ENCODE measurements at regions of chr7 and their contacts with region 1.

Region 1: DNA sequence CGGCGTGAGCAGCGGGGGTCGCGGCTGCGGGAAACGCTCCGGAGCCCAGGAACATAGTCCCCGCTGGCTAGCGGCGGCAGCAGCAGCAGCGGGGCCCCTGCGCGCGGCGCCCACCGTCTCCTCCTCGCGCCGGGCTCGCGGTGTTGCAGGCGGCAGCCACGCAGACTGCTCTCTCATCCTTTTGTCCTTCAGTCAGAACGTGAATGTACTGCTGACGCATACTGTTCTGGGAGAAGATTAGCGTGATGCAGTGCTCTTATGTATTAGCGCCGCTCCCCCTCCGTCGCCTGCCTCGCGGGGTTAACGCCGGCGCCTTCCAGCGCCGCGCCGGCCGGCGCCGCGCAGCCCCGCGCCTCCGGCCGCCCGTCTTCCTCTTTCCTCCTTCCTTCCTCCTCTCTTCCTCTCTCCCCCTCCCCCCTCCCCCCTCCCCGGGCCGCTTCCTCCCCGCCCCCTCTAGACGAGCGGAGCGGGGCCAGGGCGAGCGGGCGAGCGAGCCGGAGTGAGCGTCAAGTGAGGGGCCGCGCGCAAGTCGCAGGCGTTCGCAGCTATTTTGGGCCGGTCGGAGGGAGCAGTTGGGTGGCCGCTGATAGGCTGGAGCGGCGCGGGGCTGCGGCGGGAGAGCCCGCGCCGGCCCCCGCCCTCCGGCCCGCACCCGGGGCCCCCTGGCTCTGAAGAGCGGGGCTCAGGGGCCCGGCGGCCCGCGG is 816 bp upstream of the LRRC4 start:
- DNase-seq: peak; percentile 81
- ATAC-seq: peak; percentile 98
- H3K4me3 Mint-ChIP-seq: peak overlapping the region; percentile 64
- H3K27ac Mint-ChIP-seq: no peak overlapping the region
- H3K4me1 Mint-ChIP-seq: peaks cover 27% of the 10 kb centered on the region
- H3K27me3 Mint-ChIP-seq: no peaks in the 10 kb centered on the region

Region 2: GRCh38 chr7:127983804-127984332 is 48.2 kb before region 1 on chr7:
- CTCF ChIA-PET with region 1: no interaction called
- POLR2A ChIA-PET with region 1: no interaction called
- intact Hi-C with region 1: no loop called
- DNase-seq: peak; percentile 14
- ATAC-seq: peak; percentile 82
- H3K4me3 Mint-ChIP-seq: no peak overlapping the region
- H3K27ac Mint-ChIP-seq: no peak overlapping the region
- H3K4me1 Mint-ChIP-seq: peaks cover 32% of the 10 kb centered on the region
- H3K27me3 Mint-ChIP-seq: no peaks in the 10 kb centered on the region

Region 3: GRCh38 chr7:128056901-128057300 is 24.8 kb after region 1 on chr7:
- CTCF ChIA-PET with region 1: no interaction called
- POLR2A ChIA-PET with region 1: no interaction called
- intact Hi-C with region 1: no loop called
- DNase-seq: no peak
- ATAC-seq: no peak
- H3K4me3 Mint-ChIP-seq: no peak overlapping the region
- H3K27ac Mint-ChIP-seq: no peak overlapping the region
- H3K4me1 Mint-ChIP-seq: peaks cover 63% of the 10 kb centered on the region
- H3K27me3 Mint-ChIP-seq: no peaks in the 10 kb centered on the region

Region 4: DNA sequence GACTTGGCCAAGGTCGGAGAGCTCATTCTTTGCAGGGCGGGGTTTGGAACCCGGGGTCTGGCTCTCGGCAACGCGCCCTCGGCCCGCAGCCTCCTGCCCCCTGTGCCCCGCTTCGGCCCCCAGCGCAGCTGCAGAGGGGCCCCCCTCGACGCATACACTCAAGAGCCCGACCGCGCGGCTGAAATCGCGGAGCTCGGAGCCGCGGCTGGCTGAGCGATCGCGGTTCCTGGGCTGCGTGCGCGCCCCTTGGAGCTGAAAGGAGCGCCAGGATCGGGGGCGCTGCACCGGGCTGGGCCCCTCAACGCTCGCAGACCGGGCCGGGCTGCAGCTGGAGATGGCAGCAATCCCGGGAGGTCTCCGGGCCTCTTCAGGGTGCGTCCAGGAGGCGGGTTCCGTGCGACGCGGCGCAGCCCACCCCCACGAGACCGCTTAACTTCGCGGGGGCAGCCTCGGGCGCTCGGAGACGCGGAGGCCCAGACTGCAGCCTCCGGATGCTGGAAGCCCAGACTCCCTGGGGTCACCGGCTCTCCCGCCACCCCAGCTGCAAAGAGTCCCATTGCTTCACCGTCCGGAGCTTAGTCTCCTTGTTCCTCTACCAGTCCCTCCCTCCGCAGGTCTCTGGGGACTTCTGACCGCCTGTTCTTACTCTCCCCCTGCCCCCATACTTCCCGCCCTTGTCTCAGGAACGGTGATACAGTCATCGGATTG is 72.1 kb after region 1 on chr7:
- CTCF ChIA-PET with region 1: no interaction called
- POLR2A ChIA-PET with region 1: no interaction called
- intact Hi-C with region 1: loop called in 1 of 2 experiments (anchors 2 kb)
- DNase-seq: peak; percentile 40
- ATAC-seq: peak; percentile 9
- H3K4me3 Mint-ChIP-seq: peak overlapping the region; percentile 76
- H3K27ac Mint-ChIP-seq: no peak overlapping the region
- H3K4me1 Mint-ChIP-seq: peaks cover 53% of the 10 kb centered on the region
- H3K27me3 Mint-ChIP-seq: peaks cover 2% of the 10 kb centered on the region

Measured in activated CD4-positive, alpha-beta T cell treated with anti-CD3 and anti-CD28 coated beads for 36 hours (primary cell).